ENCODE measurements at regions of chr22 and their contacts with region 1.

Region 1: GRCh38 chr22:35921777-35922176 is 106.8 kb downstream of the RBFOX2 start:
- DNase-seq: no peak
- ATAC-seq: peak; percentile 40
- H3K4me3 Mint-ChIP-seq: no peak overlapping the region
- H3K27ac Mint-ChIP-seq: no peak overlapping the region
- H3K4me1 Mint-ChIP-seq: no peaks in the 10 kb centered on the region
- H3K27me3 Mint-ChIP-seq: peaks cover 17% of the 10 kb centered on the region
- CTCF ChIP-seq: no peak

Region 2: DNA sequence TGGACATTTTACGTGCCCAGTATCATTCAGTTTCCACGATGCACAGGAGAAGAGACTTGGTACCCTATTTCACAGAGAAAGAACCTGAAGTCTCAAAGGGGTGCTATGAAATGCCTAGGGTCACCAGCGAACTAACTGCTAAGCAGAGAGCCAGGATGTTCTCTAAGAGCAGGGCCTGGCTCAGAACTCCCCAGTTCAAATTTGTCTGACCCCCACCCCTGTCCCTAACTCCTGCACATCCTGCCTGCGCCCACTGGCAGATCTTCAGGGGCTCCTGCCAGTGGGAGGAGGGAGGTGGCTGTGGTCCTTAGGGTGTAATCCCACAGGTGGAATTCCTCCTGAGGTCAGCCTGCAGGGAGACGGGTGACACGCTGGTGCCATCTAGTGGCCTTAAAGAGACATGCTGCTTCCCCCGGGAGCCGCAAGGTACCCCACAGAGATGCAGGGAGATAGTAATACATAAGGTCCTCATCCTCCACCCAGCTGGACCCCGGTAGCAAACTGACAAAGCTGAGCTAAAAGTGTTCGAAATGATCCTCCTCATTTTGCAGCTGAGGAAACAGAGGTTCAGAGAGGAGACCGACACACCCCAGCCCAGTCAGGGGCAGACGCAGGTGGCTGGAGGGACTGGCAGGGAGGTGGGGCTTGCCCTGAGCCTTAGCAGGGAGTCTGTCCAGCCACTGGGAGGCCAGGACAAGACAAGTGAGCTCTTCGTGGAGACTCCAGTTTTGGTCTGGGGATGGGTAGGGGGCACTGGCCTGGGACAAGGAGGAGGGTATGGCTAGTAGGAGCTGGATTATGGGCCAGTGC is 338.7 kb before region 1 on chr22:
- CTCF ChIA-PET with region 1: no interaction called
- POLR2A ChIA-PET with region 1: no interaction called
- intact Hi-C with region 1: loop called (anchors 1 kb)
- DNase-seq: peak; percentile 47
- ATAC-seq: peak; percentile 86
- H3K4me3 Mint-ChIP-seq: no peak overlapping the region
- H3K27ac Mint-ChIP-seq: no peak overlapping the region
- H3K4me1 Mint-ChIP-seq: peaks cover 4% of the 10 kb centered on the region
- H3K27me3 Mint-ChIP-seq: no peaks in the 10 kb centered on the region
- CTCF ChIP-seq: peak; percentile 45

Region 3: DNA sequence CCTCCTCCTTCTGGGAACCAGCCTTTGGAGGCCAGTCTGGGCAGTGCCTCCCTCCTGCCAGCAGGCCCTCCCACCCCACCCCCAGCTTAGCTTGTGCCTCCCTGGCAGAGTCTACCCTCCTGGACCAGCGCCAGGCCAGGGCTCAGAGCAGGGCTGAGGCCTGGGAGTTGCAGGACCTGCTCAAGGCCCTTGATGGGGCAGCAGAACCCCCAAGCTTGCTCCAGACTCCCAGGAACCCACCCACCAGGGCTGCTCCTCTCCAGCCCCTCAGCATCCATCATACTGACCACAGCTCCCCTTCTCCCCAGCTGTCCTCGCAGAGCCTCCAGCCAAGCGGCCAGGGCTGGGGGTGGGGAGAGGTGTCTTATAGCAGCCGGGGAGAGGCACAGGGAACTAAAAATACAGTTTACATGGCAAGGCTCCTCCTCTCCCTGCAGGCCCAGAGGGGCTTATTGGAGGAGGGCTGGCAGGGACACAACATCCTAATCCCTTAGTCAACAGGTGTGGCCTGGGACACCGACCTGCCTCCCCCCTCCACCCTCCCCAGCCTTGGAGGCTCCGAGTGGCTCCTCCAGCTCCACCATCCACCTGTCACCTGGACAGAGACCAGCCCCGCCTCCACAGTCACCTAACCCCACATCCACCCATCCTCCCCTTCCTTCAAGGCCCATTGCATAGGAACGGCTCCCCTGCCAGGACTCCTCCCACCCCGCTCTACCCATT is 299.4 kb before region 1 on chr22:
- CTCF ChIA-PET with region 1: no interaction called
- POLR2A ChIA-PET with region 1: no interaction called
- intact Hi-C with region 1: loop called (anchors 1 kb)
- DNase-seq: no peak
- ATAC-seq: no peak
- H3K4me3 Mint-ChIP-seq: no peak overlapping the region
- H3K27ac Mint-ChIP-seq: no peak overlapping the region
- H3K4me1 Mint-ChIP-seq: peaks cover 6% of the 10 kb centered on the region
- H3K27me3 Mint-ChIP-seq: peaks cover 34% of the 10 kb centered on the region
- CTCF ChIP-seq: no peak

Region 4: DNA sequence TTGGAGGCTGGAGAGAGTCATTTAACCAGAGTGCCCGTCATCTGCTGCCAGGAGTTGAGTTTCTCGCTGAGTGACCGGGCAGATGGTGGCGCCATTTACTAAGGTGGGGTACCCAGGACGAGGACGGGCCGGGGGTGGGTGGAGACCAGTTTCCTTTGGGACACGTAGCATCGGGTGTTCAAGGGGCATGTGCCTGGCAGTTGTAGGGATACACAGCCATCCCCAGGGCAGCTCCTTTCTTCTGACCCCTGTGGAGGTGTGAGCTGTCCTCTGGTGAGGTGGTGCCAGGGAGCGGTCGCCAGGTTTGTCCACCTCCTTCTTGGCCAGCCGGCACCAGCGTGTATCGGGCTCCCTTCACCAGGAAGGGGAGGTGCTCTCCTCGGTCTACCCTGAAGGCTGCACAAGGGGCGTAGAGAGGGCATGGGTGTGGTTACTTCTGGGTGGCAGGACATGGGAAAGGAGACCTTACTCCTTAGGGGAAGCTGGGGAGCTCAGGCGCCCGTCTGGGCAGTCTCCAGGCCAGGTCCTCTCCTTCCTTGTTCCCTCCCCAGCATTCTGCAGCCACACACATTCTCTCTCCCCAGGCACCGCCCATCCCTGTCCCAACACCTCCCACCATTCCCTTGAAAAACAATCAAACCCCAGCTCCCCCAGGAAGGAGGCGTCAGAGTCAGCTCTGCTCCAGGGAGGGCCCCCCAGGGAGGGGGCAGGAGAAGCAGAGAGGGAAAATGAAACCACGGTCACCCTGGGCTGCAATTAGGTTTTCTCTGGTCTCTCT is 294.3 kb before region 1 on chr22:
- CTCF ChIA-PET with region 1: no interaction called
- POLR2A ChIA-PET with region 1: no interaction called
- intact Hi-C with region 1: loop called (anchors 1 kb)
- DNase-seq: no peak
- ATAC-seq: no peak
- H3K4me3 Mint-ChIP-seq: no peak overlapping the region
- H3K27ac Mint-ChIP-seq: no peak overlapping the region
- H3K4me1 Mint-ChIP-seq: peaks cover 19% of the 10 kb centered on the region
- H3K27me3 Mint-ChIP-seq: peaks cover 43% of the 10 kb centered on the region
- CTCF ChIP-seq: no peak

Measured in activated B cell treated with CpG ODN at 0.5 μM for 24 hours (primary cell).